WTC11 (cell line): ENCODE measurements at regions of chr6 and their contacts with region 1.

Region 1: DNA sequence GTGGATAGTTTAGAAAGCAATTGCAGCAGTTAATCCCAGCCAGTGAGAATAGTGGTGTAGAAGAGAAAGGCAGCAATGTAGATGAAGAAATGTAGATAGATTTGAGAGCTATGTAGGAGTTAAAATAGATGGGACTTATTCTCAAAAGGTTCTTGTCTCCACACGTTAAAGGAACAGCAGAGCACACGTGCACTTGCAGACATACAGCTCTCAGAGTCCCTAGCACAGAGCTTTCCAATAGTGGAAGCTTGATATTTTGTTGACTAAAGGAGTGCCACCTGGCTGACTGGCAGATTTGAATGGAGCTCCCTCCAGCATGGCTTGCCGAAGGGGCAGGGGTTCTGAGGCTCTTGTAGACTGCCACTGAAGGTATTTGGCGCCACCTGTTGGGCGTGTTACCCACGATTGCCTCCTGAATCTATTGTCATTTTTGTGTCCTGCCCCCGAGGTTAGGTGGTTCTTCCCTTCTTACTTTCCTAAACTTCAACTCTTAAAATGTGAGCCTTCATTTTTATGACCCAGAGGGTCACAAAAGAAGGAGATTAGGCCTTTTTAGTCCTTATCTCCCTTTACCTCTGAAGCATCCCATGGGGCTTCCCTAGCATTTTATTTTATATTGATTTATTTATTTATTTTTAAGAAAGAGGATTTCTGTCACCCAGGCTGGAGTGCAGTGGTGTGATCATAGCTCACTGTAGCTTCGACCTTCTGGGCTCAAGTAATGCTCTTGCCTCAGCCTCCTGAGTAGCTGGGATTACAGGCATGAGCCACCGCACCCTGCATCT is 16.4 kb downstream of the BRD2 start:
- DNase-seq: peak; percentile 94
- ATAC-seq: peak; percentile 79
- H3K4me3 Mint-ChIP-seq: no peak overlapping the region
- H3K27ac Mint-ChIP-seq: peak overlapping the region; percentile 82
- H3K4me1 Mint-ChIP-seq: peaks cover 18% of the 10 kb centered on the region
- H3K27me3 Mint-ChIP-seq: no peaks in the 10 kb centered on the region
- CTCF ChIP-seq: peak; percentile 68

Region 2: GRCh38 chr6:32868257-32868788 is 116.5 kb before region 1 on chr6:
- CTCF ChIA-PET with region 1: interaction called, 24 read pairs
- POLR2A ChIA-PET with region 1: no interaction called
- DNase-seq: peak; percentile 79
- ATAC-seq: peak; percentile 50
- H3K4me3 Mint-ChIP-seq: no peak overlapping the region
- H3K27ac Mint-ChIP-seq: no peak overlapping the region
- H3K4me1 Mint-ChIP-seq: no peaks in the 10 kb centered on the region
- H3K27me3 Mint-ChIP-seq: peaks cover 16% of the 10 kb centered on the region
- CTCF ChIP-seq: peak; percentile 86

Region 3: GRCh38 chr6:32905078-32905477 is 79.7 kb before region 1 on chr6:
- CTCF ChIA-PET with region 1: interaction called, 10 read pairs
- POLR2A ChIA-PET with region 1: no interaction called
- DNase-seq: no peak
- ATAC-seq: no peak
- H3K4me3 Mint-ChIP-seq: no peak overlapping the region
- H3K27ac Mint-ChIP-seq: no peak overlapping the region
- H3K4me1 Mint-ChIP-seq: no peaks in the 10 kb centered on the region
- H3K27me3 Mint-ChIP-seq: no peaks in the 10 kb centered on the region
- CTCF ChIP-seq: no peak

Region 4: DNA sequence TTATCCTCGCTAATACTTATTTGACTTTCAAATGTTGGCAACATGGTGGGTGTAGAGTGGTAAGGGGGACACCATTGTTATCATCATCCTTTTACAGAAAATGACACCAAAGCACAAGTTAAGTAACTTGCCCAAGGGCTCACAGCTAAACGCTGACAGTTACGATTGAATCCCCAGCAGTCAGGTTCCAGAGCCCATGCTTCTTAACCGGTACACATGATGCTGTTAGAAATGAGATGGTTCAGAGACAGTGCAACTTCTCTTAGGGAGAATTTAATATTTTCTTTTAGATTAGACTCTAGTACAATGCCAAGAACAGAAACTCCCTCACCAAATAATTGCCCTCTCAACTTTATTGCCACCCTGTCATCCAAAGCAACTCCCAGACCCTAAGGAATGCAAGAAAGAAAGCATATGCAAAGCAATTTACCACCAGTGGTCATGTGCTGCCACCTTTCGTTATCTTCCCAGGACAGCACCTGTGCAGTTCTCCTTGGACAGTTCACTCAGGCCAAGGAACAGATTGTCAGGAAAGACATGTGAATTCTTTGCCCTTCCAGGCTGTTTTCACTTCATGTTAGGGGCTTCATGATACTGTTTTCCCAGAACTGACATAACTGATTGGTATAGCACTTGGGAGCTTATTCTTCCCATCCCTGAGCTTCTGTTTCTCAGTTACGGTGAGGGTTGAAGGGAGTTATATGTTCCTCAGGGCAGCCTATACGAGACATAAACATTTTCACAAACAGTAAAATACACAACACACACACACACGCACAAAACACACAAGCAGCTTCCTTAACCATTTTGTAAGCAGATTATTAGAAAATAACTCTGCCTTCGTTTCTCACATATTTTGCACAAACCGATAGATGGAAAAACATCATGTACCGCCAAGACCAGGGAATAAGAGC is 37.0 kb before region 1 on chr6:
- CTCF ChIA-PET with region 1: interaction called, 128 read pairs
- POLR2A ChIA-PET with region 1: no interaction called
- DNase-seq: peak; percentile 63
- ATAC-seq: peak; percentile 97
- H3K4me3 Mint-ChIP-seq: no peak overlapping the region
- H3K27ac Mint-ChIP-seq: peak overlapping the region; percentile 32; the same call in 1 of the 2 replicates
- H3K4me1 Mint-ChIP-seq: peaks cover 13% of the 10 kb centered on the region; the same call in 1 of the 2 replicates
- H3K27me3 Mint-ChIP-seq: no peaks in the 10 kb centered on the region
- CTCF ChIP-seq: peak; percentile 35; the same call in 1 of the 2 replicates

Region 5: DNA sequence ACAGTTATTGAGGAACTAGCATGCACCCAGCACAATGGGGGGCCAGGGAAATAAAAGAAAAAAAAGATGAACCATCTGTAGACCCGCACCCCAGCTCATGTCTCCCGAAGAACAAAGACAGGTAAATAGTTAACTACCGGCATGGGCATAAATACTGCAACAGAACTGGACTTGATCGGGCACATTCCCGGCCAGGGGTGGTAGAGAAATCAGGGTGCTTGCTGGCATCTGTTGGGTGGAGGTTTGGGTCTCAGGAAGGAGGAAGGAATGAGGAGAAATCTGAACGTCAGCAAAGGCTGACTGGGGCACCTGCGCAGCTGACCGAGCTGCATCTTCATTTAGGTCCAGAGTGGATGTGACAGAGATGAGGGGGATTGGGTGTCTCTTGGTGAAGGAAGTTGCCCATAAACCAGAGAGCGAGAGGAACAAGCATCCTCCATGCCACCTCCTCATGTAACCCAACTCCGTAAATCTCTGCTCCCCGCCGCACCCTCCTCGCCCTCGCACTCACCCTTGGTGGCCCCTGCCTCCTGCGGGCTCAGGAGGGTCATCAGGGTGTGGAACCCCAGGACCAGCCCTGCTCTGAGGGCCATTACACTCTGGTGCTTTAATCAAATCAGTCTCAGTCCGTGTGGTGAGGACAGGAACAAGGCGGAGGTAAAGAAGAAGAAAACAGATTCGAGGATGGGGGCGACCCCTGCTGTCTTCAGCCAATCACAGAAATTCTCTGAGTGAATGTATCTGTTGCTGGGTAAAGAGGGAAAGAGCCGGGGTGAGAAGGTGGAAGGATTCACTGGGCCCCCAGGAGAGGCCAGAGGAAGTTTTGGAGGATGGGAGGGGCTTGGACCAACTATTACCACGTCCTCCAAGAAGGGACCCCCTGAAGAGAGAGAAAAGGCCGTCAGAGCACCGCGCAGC is 24.4 kb after region 1 on chr6 and contains the start of gene HLA-DOA:
- CTCF ChIA-PET with region 1: interaction called, 11 read pairs
- POLR2A ChIA-PET with region 1: no interaction called
- DNase-seq: peak; percentile 78
- ATAC-seq: peak; percentile 94
- H3K4me3 Mint-ChIP-seq: peak within 1 kb of the TSS; percentile 82
- H3K27ac Mint-ChIP-seq: peak within 1 kb of the TSS; percentile 76
- H3K4me1 Mint-ChIP-seq: peaks cover 33% of the 10 kb centered on the region
- H3K27me3 Mint-ChIP-seq: no peaks in the 10 kb centered on the region; the same call in 1 of the 2 replicates
- CTCF ChIP-seq: no peak
- total RNA-seq, gene HLA-DOA: 13.6 to 24.6 TPM (median 24.4 TPM) in 3 replicates

Region 6: GRCh38 chr6:33126101-33126714 is 141.4 kb after region 1 on chr6:
- CTCF ChIA-PET with region 1: interaction called, 11 read pairs
- POLR2A ChIA-PET with region 1: no interaction called
- DNase-seq: peak; percentile 91
- ATAC-seq: peak; percentile 61
- H3K4me3 Mint-ChIP-seq: peak overlapping the region; percentile 9; the same call in 1 of the 2 replicates
- H3K27ac Mint-ChIP-seq: peak overlapping the region; percentile 91
- H3K4me1 Mint-ChIP-seq: peaks cover 51% of the 10 kb centered on the region
- H3K27me3 Mint-ChIP-seq: peaks cover 2% of the 10 kb centered on the region; the same call in 1 of the 2 replicates
- CTCF ChIP-seq: peak; percentile 88